Psoas muscle (tissue), 8 donors: ENCODE measurements at regions of chr5 and their contacts with region 1.

Region 1: GRCh38 chr5:112707187-112708102 is 30.2 kb upstream of the APC start:
- DNase-seq: peak; percentile 97 to 99
- ATAC-seq: peak; percentile 98 to 99 (median 98)
- H3K4me3 ChIP-seq: peak overlapping the region; percentile 93
- H3K27ac ChIP-seq: peak overlapping the region; percentile 97
- H3K4me1 ChIP-seq: peaks cover 29% of the 10 kb centered on the region
- H3K27me3 ChIP-seq: no peaks in the 10 kb centered on the region
- CTCF ChIP-seq: peak; percentile 6

Region 2: DNA sequence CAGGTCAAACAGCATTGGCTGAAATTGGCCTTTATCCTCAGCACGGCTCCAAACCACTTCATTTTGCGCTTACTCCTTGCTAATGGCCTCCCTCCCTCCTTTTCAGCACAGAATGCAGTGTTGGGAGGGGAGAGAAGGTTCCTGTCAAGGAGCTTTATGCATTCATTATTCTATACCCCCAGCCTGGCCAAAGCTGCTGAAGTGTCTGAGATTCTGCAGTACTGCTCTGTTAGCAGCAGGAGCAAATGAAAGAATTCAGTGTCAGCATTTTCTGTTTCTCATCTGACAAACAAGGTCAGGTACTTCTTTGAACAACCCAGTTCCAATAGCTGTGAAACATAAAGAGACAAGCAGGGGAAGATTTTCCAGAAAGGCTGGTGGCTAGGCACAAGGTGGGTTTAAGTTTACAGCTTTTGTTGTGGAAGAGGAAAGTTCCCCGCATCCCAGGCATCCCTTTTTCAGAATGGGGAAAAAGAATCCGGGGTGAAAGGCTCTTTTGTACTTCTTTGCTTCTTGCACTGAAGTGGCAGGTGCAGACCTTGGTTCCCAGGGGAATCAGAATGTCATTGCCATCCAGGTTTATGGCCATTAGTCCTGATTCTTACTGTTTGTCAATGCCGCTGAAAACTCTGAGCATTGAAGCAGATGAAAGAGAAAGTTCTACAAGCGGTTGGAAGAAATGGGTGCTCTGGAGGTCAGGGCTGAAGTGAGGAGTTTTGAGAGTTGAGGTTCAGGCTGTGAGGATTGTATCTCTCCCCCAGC is 79.0 kb before region 1 on chr5:
- intact Hi-C with region 1: no loop called
- DNase-seq: no peak
- ATAC-seq: no peak
- H3K4me3 ChIP-seq: no peak overlapping the region
- H3K27ac ChIP-seq: no peak overlapping the region
- H3K4me1 ChIP-seq: no peaks in the 10 kb centered on the region
- H3K27me3 ChIP-seq: no peaks in the 10 kb centered on the region
- CTCF ChIP-seq: no peak

Region 3: DNA sequence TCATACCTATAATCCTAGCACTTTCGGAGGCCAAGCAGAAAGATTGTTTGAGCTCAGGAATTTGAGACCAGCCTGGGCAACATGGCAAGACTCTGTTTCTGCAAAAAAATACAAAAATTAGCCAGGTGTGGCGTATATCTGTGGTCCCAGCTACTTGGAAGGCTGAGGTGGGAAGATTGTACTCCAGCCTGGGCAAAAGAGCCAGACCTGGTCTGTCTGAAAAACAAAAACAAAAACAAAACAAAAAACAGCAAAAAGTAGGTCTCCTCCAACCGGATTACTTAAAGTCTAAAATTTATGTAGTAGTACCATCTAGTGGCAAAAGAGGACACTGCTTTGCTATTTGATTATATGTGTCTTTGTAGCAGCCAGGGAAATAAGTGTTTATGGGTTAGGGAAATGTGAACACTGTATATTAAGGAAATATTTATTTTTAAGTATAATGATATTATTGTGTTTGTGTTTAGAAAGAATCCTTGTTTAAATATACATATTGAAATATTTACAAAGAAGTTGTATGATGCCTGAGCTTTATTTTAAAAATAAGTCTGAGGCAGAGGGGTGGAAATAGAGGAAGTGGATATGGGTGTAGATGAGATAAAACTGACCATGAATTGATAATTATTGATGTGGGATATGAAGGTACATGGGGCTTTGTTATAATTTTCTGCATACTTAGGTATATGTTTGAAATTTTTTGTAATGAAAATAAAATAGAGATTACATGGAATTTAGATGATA is 50.2 kb after region 1 on chr5:
- intact Hi-C with region 1: loop called in 1 of 2 experiments (anchors 5 kb)
- DNase-seq: no peak
- ATAC-seq: peak; percentile 68 to 96 (median 78)
- H3K4me3 ChIP-seq: no peak overlapping the region
- H3K27ac ChIP-seq: peak overlapping the region; percentile 31
- H3K4me1 ChIP-seq: peaks cover 3% of the 10 kb centered on the region
- H3K27me3 ChIP-seq: no peaks in the 10 kb centered on the region
- CTCF ChIP-seq: peak; percentile 87